Endothelial cell of umbilical vein (primary cell): ENCODE measurements at regions of chr1 and their contacts with region 1.

Region 1: GRCh38 chr1:47225430-47226100 is 6.5 kb downstream of the TAL1 start:
- DNase-seq: peak; percentile 48
- H3K4me3 ChIP-seq: peak overlapping the region; percentile 3 to 41 (median 6)
- H3K27ac ChIP-seq: peak overlapping the region; percentile 65
- H3K4me1 ChIP-seq: peaks cover 37% of the 10 kb centered on the region
- H3K27me3 ChIP-seq: no peaks in the 10 kb centered on the region
- CTCF ChIP-seq: no peak
- POLR2A ChIP-seq: no peak

Region 2: DNA sequence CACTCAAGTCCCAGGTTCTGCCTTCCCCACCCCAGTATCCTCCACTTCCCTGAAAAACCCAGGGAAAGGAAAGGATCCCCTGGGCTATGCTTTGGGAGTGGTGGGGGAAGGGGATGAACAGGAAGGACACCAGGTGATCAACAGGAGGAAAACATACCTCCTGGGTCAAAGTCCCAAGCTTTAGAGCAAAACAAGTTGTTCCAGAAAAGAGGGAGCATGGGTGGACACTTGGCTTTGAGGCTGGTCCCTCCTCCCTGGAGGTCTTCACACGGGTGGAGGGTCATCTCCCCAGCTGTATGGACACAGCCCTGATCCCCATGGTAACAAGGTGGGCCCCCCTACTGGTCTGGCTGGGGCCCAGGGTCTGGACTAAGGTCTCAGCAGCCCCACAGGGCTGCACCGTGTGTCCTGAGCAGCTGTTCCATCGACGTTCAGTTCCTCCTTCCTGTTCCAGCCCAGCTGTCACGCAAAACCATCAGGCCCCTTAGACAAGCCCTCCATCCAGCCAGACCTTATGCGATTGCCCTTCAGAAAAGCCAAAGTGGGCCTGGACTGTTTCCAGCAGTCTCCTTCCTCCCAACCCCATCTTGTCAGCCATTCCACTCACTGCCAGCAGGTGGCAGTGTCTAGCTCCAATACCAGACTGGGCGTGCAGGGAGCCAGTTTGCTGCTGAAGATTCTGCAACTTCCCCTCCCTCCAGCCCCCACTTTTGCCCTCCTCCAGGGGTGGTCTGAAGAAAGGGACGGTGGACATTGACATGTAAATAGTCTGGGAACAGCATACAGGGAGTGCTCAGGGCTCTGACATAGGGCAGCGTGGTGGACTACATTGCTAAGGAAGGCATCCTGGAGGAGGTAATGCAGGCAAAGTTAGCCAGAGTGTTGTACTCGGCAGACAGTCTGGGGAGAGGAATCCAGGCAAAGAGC is 32.8 kb before region 1 on chr1:
- CTCF ChIA-PET with region 1: interaction called, 54 read pairs
- POLR2A ChIA-PET with region 1: no interaction called
- dilution Hi-C with region 1: no loop called
- intact Hi-C with region 1: loop called (anchors 1 kb)
- DNase-seq: peak; percentile 76
- H3K4me3 ChIP-seq: no peak overlapping the region
- H3K27ac ChIP-seq: no peak overlapping the region
- H3K4me1 ChIP-seq: peaks cover 5% of the 10 kb centered on the region
- H3K27me3 ChIP-seq: no peaks in the 10 kb centered on the region
- CTCF ChIP-seq: peak; percentile 94 to 97
- POLR2A ChIP-seq: no peak

Region 3: GRCh38 chr1:47399138-47399845 is 173.7 kb after region 1 on chr1:
- CTCF ChIA-PET with region 1: no interaction called
- POLR2A ChIA-PET with region 1: no interaction called
- dilution Hi-C with region 1: no loop called
- intact Hi-C with region 1: no loop called
- DNase-seq: no peak
- H3K4me3 ChIP-seq: no peak overlapping the region
- H3K27ac ChIP-seq: no peak overlapping the region
- H3K4me1 ChIP-seq: no peaks in the 10 kb centered on the region
- H3K27me3 ChIP-seq: peaks cover 6 to 13% of the 10 kb centered on the region in 2 experiments
- CTCF ChIP-seq: no peak
- POLR2A ChIP-seq: no peak